Transverse colon (tissue), 4 donors: ENCODE measurements at regions of chr17 and their contacts with region 1.

Region 1: DNA sequence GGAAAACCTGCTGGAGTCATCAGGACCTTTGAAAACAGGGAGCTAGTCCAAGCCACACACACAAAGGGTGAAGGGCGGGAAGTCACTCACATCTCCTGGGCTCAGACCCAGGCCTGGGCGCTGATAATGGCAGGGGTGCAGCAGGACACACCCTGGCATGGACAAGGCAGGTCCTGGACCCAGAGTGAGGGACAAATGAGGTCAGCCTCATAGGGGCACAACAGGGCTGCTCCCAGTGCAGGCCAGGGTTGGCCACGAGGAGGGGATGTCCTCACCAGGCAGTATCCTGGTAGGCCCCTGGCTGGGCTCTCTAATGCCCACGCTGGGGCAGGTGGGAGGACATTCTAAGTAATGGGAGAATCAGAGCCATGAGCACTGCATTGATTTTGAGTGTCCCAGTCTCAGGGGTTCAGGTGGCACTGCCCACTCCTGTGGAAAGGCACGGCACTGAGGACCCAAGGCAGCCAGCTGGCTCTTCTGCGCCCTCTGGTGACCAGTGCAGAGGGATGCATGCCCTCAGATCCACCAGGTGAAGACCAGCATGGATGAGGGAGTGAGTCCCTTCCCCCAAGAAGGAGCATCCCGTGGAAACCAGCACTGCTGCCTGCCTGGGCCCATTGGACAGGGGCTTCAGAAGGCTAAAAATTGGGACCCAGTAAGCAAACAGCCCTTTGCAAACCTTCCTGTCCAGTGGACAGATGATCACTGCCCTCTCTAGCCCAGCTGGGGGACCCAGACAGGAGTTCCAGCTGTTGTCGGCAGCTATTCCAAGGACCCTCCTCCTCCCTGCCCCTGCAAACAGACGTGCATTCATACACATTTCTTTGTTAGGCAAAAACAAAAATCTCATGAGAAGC is 23.4 kb upstream of the SREBF1 start:
- DNase-seq: peak; percentile 68
- H3K4me3 ChIP-seq: no peak overlapping the region
- H3K27ac ChIP-seq: peak overlapping the region in 1 of 4 donors; percentile 10
- H3K4me1 ChIP-seq: peaks cover 0 to 3% (median 0%) of the 10 kb centered on the region in 4 donors
- H3K27me3 ChIP-seq: no peaks in the 10 kb centered on the region
- CTCF ChIP-seq: peak; percentile 94 to 98 (median 95)
- EP300 ChIP-seq: no peak
- POLR2A ChIP-seq: no peak

Region 2: DNA sequence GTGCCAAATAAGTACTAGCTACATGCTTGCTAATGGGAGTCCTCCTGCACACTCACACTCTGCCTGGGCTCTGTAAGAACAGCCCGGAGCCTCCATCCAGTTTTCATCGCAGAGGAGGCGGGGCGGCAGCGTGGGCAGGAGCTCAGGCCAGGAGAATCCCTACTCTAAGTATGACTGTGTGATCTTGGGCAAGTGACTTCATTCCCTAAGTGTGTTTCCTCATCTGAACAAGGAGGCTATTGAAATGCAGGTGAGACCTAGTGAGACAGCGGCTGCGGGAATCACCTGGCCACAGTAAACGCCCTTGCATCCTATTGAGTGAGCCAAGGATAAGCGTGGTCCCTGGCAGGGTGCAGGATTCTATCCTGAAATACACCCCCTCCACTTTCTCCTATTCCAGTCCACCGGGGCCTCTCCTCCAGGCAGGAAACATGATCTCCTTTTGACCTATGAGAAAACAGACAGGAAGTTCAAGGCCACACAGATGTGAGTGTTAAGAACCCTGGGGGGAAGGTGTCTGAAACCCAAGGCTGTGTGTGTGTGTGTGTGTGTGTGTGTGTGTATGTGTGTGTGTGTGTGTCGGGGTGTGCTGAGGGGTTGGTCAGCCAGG is 184.1 kb before region 1 on chr17:
- in situ Hi-C with region 1: loop called in 2 of 4 experiments (anchors 5 to 25 kb)
- intact Hi-C with region 1: loop called (anchors 1 kb)
- DNase-seq: no peak
- H3K4me3 ChIP-seq: no peak overlapping the region
- H3K27ac ChIP-seq: no peak overlapping the region
- H3K4me1 ChIP-seq: peaks cover 0 to 6% (median 1%) of the 10 kb centered on the region in 4 donors
- H3K27me3 ChIP-seq: no peaks in the 10 kb centered on the region
- CTCF ChIP-seq: no peak
- EP300 ChIP-seq: no peak
- POLR2A ChIP-seq: no peak

Region 3: GRCh38 chr17:17681187-17681848 is 178.8 kb before region 1 on chr17 and contains the start of gene RAI1:
- in situ Hi-C with region 1: loop called in 2 of 4 experiments (anchors 5 to 25 kb)
- intact Hi-C with region 1: loop called (anchors 1 kb)
- DNase-seq: peak; percentile 80
- H3K4me3 ChIP-seq: peak within 1 kb of the TSS; percentile 49 to 90 (median 74)
- H3K27ac ChIP-seq: peak within 1 kb of the TSS; percentile 89 to 98 (median 92)
- H3K4me1 ChIP-seq: peaks cover 17 to 36% (median 26%) of the 10 kb centered on the region in 4 donors
- H3K27me3 ChIP-seq: no peaks in the 10 kb centered on the region
- CTCF ChIP-seq: peak in 4 of 5 experiments; percentile 42 to 74 (median 64)
- EP300 ChIP-seq: no peak
- POLR2A ChIP-seq: no peak
- total RNA-seq, gene RAI1: 14.1 to 163 (median 34.6) TPM

Region 4: GRCh38 chr17:17739388-17740066 is 120.6 kb before region 1 on chr17:
- in situ Hi-C with region 1: no loop called
- intact Hi-C with region 1: no loop called
- DNase-seq: peak; percentile 46
- H3K4me3 ChIP-seq: no peak overlapping the region
- H3K27ac ChIP-seq: peak overlapping the region; percentile 76 to 88 (median 80)
- H3K4me1 ChIP-seq: peaks cover 30 to 53% (median 47%) of the 10 kb centered on the region in 4 donors
- H3K27me3 ChIP-seq: no peaks in the 10 kb centered on the region
- CTCF ChIP-seq: no peak
- EP300 ChIP-seq: no peak
- POLR2A ChIP-seq: no peak

Region 5: DNA sequence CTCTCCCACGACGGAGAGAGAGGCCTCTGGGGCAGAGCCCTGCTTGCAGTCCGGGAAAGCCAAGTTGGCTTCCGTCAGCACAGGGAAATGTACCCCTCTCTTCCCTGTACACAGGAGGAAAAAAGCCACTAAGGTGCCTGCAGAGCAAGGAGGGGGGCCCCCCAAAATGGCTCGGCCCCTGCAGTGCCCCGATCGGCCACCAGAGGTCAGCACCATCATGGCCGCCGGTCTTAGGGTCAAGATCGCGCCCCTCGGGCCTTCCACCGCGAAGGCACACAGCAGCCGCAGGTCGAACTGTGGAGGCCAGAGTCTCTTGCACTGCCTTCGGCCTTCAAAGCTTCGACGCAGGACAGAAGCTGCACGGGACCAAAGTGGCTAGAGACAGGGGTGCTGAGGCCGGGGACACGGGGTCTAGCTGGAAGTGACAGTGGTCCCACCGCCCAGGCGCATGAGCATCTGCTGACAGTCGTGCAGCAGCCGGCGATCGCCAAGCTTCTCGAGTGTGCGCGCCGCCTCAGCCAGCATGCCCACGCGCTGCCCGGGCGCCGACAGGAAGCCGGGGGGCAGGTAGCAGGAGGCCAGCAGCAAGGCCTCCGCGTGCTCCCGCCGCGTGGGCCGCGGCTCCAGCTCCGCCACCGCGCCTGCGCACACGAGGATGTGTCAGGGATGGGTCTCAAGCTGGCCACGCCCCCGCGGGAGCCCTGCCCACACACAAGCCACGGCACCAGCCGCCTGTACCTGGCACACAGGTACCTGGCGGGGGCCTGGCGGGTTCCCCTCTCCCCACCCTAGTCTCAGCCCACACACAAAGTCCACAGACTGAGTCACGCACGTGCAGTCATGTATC is 47.7 kb before region 1 on chr17:
- in situ Hi-C with region 1: loop called in 3 of 4 experiments (anchors 5 to 10 kb)
- intact Hi-C with region 1: loop called (anchors 2 kb)
- DNase-seq: peak; percentile 74
- H3K4me3 ChIP-seq: no peak overlapping the region
- H3K27ac ChIP-seq: peak overlapping the region; percentile 34 to 60 (median 46)
- H3K4me1 ChIP-seq: peaks cover 3 to 29% (median 17%) of the 10 kb centered on the region in 4 donors
- H3K27me3 ChIP-seq: no peaks in the 10 kb centered on the region
- CTCF ChIP-seq: peak; percentile 99 to 100 (median 100)
- EP300 ChIP-seq: no peak
- POLR2A ChIP-seq: no peak

Region 6: GRCh38 chr17:17819561-17819995 is 40.6 kb before region 1 on chr17:
- in situ Hi-C with region 1: loop called in 1 of 4 experiments (anchors 5 kb)
- intact Hi-C with region 1: no loop called
- DNase-seq: peak; percentile 85
- H3K4me3 ChIP-seq: no peak overlapping the region
- H3K27ac ChIP-seq: peak overlapping the region in 3 of 4 donors; percentile 53 to 98 (median 57)
- H3K4me1 ChIP-seq: peaks cover 28 to 67% (median 60%) of the 10 kb centered on the region in 4 donors
- H3K27me3 ChIP-seq: no peaks in the 10 kb centered on the region
- CTCF ChIP-seq: no peak
- EP300 ChIP-seq: no peak
- POLR2A ChIP-seq: no peak